ENCODE measurements at regions of chr14 and their contacts with region 1.

Region 1: GRCh38 chr14:76917158-76917596 is 91.0 kb downstream of the LRRC74A start:
- DNase-seq: no peak
- H3K4me3 Mint-ChIP-seq: no peak overlapping the region
- H3K27ac Mint-ChIP-seq: no peak overlapping the region
- H3K4me1 Mint-ChIP-seq: peaks cover 37% of the 10 kb centered on the region
- H3K27me3 Mint-ChIP-seq: no peaks in the 10 kb centered on the region

Region 2: GRCh38 chr14:76876076-76876475 is 41.1 kb before region 1 on chr14:
- intact Hi-C with region 1: loop called (anchors 2 kb)
- DNase-seq: peak; percentile 20
- H3K4me3 Mint-ChIP-seq: no peak overlapping the region
- H3K27ac Mint-ChIP-seq: no peak overlapping the region
- H3K4me1 Mint-ChIP-seq: no peaks in the 10 kb centered on the region
- H3K27me3 Mint-ChIP-seq: no peaks in the 10 kb centered on the region

Region 3: DNA sequence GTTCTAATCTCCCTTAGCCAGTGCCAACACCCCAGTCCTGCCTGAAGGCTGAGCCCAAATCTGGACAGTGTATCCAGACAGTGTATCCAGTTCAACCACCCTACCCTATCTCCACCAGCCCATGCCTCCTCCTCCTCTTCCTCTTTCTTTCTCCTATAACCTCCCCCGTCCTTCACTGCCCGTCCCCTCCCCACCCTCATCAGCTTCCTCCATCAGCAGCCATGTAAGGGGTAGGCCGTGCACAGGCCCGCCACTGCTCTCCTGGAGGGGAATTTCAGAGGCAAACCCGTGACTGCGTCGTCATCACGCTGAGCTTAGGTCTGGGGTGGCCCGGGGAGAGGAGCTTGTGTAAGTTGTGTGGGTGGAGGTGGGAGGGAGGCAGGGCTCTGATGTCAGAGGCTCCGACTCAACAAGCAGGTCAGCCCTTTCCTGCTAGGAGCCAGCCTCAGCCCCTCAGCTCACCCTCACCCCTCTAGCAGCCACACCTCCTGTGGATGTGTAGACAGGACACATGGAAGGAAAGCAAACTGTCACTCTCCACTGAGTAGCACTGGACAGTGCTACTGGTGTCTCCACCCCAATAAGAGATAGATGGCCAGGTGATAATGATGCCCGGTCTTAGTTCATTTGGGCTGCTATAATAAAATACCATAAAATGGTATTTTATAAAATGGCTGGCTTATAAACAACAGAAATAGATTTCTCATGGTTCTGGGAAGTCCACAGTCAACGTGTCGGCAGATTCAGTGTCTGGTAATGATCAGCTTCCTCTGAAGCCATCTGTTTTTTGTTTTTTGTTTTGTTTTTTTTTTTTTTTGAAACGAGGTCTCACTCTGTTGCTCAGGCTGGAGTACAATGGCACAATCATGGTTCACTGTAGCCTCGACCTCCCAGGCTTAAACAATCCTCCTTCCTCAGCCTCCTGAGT is 60.9 kb after region 1 on chr14:
- intact Hi-C with region 1: no loop called
- DNase-seq: peak; percentile 75
- H3K4me3 Mint-ChIP-seq: no peak overlapping the region
- H3K27ac Mint-ChIP-seq: peak overlapping the region; percentile 86
- H3K4me1 Mint-ChIP-seq: peaks cover 31% of the 10 kb centered on the region
- H3K27me3 Mint-ChIP-seq: no peaks in the 10 kb centered on the region

Region 4: DNA sequence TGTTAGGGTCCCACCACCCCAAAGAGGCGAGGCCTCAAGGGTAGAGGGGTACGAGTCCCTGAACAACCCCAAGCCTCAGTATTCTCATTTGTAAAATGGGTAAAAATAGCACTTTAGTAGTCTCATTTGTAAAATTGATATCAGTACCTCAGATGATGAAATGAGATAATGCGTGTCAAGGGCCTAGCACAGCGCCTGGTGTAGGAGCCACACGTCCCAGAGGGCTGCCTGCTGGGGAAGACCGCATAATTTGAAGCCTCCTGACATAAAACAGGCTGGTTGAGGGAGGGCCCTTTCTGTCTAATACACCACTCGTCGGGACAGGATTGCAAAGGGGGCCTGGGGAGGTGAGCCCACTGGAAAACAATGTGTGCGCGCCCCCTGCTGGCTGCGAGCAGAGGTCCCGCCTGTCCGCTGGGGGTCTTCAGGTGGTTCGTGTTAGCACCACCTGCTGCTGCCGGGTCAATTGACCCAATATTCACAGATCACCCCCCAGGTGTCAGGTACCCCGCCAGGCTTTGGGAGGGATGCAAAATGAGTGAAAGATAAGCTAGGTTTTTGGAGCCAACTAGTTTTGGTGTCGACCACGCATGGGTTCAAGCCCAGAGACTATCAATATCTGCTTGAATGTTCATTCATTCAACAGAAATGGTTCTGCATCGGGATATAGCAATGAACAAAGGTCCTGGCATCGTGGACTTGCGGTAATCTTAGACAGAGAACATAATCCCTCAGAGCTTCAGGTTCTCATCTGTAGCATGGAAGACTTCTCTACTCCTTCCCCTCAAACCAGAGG is 136.1 kb after region 1 on chr14:
- intact Hi-C with region 1: loop called (anchors 1 kb)
- DNase-seq: peak; percentile 57
- H3K4me3 Mint-ChIP-seq: no peak overlapping the region
- H3K27ac Mint-ChIP-seq: no peak overlapping the region
- H3K4me1 Mint-ChIP-seq: peaks cover 19% of the 10 kb centered on the region
- H3K27me3 Mint-ChIP-seq: no peaks in the 10 kb centered on the region

Measured in activated T-helper 2 cell treated with anti-CD3 and anti-CD28 coated beads, Interferon-gamma antibody, Interleukin-2, Interleukin-4, amounts not matched to agents 10 μg/mL and 5 μg/mL and 100 μg/mL, durations not matched to agents 14 hours and 24 hours and 36 hours (primary cell).